ENCODE measurements at regions of chr5 and their contacts with region 1.

Region 1: GRCh38 chr5:124725040-124725434 is 21.4 kb downstream of the ZNF608 start:
- DNase-seq: no peak
- ATAC-seq: peak; percentile 78
- H3K4me3 ChIP-seq: peak overlapping the region; percentile 46; the same call in 1 of the 2 replicates
- H3K27ac ChIP-seq: peak overlapping the region; percentile 73
- H3K4me1 ChIP-seq: peaks cover 12% of the 10 kb centered on the region
- H3K27me3 ChIP-seq: no peaks in the 10 kb centered on the region
- CTCF ChIP-seq: peak; percentile 32 to 44 (median 33); a peak in 5 of 6 replicates
- EP300 ChIP-seq: no peak
- POLR2A ChIP-seq: no peak
- RAD21 ChIP-seq: peak; percentile 43

Region 2: GRCh38 chr5:124741711-124742496 is 16.9 kb after region 1 on chr5:
- CTCF ChIA-PET with region 1: interaction called, 5 read pairs
- POLR2A ChIA-PET with region 1: interaction called, 8 read pairs
- RAD21 ChIA-PET with region 1: interaction called, 27 read pairs
- SMC1A ChIA-PET with region 1: interaction called, 12 read pairs
- in situ Hi-C with region 1: no loop called
- intact Hi-C with region 1: loop called (anchors 2 kb)
- DNase-seq: no peak
- ATAC-seq: no peak
- H3K4me3 ChIP-seq: peak overlapping the region; percentile 71
- H3K27ac ChIP-seq: peak overlapping the region; percentile 67
- H3K4me1 ChIP-seq: peaks cover 3% of the 10 kb centered on the region
- H3K27me3 ChIP-seq: 0 out of 4 replicates have a peak, but pooled peaks cover 0 to 4% of the 10 kb centered on the region in 2 experiments
- CTCF ChIP-seq: no peak
- EP300 ChIP-seq: no peak
- POLR2A ChIP-seq: no peak
- RAD21 ChIP-seq: no peak